Right cardiac atrium (tissue), 5 donors: ENCODE measurements at regions of chr4 and their contacts with region 1.

Region 1: DNA sequence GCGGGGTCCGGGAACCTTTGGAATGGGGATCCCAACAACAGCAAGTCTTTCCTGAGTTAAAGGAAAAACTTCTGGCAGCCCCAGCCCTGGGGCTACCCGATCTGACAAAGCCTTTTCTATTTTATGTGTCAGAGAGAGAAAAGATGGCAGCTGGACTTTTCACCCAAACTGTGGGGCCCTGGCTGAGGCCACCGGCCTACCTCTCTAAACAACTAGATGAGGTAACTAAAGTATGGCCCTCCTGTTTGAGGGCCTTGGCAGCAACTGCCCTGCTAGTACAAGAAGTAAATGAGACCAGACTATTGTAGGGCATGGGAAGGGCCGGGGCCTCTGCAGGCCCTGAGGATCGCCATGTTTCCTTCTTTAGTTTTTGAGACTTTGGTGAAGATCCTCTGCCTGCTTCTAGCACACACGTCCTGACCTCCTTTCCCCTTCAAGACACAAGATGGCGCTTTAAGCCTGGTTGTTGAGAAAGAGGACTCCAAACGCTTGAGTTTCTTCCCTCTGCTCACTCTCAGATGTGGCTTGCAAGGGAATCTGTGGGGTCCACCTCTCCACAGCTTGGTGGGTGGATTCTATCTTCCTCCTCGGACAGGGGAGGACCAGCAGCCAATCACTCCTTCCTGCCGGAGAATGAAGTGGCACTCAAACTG is 18.5 kb upstream of the DRD5 start:
- DNase-seq: no peak
- ATAC-seq: peak in 1 of 2 donors; percentile 46
- H3K4me3 ChIP-seq: no peak overlapping the region
- H3K27ac ChIP-seq: no peak overlapping the region
- H3K4me1 ChIP-seq: no peaks in the 10 kb centered on the region
- H3K27me3 ChIP-seq: no peaks in the 10 kb centered on the region

Region 2: DNA sequence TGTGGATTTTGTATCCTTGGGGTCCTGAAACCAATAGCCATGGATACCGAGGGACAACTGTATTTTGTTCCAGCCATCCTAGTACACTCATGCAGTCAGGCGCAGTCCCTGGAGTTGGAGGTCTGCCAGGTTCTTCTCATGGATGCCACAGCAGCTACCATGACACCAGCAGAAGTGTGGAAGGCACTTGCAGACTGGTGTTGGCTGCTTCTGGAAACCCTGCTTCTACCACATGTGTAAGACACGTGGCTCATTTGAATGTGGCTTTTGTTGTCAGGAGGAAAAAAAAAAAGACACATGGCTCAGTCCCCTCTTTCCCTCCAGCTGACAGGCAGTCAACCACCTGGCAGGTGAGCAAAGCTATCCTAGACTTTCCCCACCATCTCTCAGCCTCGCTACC is 37.9 kb after region 1 on chr4:
- intact Hi-C with region 1: no loop called
- DNase-seq: peak in 1 of 3 donors; percentile 41
- ATAC-seq: no peak
- H3K4me3 ChIP-seq: no peak overlapping the region
- H3K27ac ChIP-seq: no peak overlapping the region
- H3K4me1 ChIP-seq: no peaks in the 10 kb centered on the region
- H3K27me3 ChIP-seq: no peaks in the 10 kb centered on the region

Region 3: GRCh38 chr4:9898596-9899305 is 135.8 kb after region 1 on chr4:
- intact Hi-C with region 1: loop called (anchors 5 to 10 kb)
- DNase-seq: peak; percentile 66 to 80 (median 79)
- ATAC-seq: peak; percentile 91 to 92
- H3K4me3 ChIP-seq: no peak overlapping the region
- H3K27ac ChIP-seq: no peak overlapping the region
- H3K4me1 ChIP-seq: no peaks in the 10 kb centered on the region
- H3K27me3 ChIP-seq: no peaks in the 10 kb centered on the region

Region 4: DNA sequence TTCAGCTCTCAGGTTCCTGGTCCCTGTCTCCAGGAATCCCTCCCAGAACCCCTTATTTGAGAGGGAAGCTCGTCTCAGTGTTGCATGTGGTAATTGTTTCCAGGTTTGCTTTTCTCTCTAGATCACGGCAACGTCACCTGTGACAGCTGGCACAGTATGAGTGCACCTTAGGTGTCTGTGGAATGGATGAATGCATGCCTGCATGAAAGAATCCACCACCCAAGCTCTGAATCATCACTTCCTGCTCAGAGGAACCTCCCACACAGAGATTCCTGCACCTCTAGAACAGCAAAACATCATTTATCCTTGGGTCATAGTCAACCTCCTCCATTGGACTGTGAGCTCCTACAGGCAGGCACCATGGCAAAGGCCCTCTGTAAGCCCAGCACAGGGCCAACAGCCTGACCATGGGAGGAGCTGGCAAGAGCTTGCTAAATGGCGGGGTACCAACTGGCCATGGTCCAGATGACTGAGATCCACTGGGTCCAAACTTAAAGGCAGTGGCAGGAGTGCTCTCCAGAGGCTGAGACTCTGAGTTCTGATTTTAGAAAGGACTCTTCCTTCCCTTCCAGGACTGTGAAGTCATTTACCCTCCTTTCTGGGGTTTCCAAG is 142.1 kb after region 1 on chr4:
- intact Hi-C with region 1: loop called in 1 of 4 experiments (anchors 10 kb)
- DNase-seq: peak in 2 of 3 donors; percentile 64 to 66
- ATAC-seq: peak in 1 of 2 donors; percentile 30
- H3K4me3 ChIP-seq: no peak overlapping the region
- H3K27ac ChIP-seq: no peak overlapping the region
- H3K4me1 ChIP-seq: peaks cover 4% of the 10 kb centered on the region
- H3K27me3 ChIP-seq: no peaks in the 10 kb centered on the region

Region 5: GRCh38 chr4:10013722-10014121 is 250.8 kb after region 1 on chr4:
- intact Hi-C with region 1: loop called (anchors 2 to 5 kb)
- DNase-seq: peak in 2 of 3 donors; percentile 71 to 74
- ATAC-seq: peak; percentile 48 to 50
- H3K4me3 ChIP-seq: no peak overlapping the region
- H3K27ac ChIP-seq: no peak overlapping the region
- H3K4me1 ChIP-seq: peaks cover 3% of the 10 kb centered on the region
- H3K27me3 ChIP-seq: no peaks in the 10 kb centered on the region

Region 6: DNA sequence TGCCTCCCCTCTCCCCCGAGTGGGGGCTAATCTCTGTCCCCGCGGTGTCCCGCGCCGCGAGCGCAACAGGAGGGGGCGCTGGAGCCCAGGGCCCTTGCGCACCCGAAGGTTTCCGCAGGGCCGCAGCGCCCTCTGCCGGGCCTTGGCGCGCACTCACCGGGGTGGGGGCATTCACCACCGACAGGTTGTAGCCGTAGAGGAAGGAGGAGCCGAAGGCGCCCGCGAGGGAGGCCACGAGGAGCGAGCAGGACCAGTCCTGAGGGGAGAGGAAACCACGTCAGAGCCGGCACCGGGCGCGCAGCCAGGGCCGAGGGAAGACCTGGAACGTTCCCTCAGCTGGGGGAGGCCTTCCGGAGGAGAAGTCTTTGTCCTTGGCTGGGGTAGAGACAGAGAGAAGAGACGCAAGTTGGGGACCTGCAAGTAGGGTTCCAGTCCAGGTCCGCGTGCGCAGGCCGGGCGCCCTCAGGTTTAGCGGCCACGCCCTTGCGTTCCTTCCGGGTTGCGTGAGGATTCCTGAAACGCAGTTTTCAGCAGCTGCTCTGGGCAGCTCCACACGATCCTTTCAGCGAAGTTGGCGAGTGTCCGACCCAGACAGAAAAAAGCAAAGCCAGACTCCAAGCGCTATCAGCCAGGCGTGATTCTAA is 256.0 kb after region 1 on chr4:
- intact Hi-C with region 1: loop called in 3 of 4 experiments (anchors 2 to 5 kb)
- DNase-seq: peak; percentile 99 to 100 (median 99)
- ATAC-seq: peak; percentile 96 to 98
- H3K4me3 ChIP-seq: peak overlapping the region; percentile 35
- H3K27ac ChIP-seq: peak overlapping the region; percentile 90
- H3K4me1 ChIP-seq: peaks cover 22% of the 10 kb centered on the region
- H3K27me3 ChIP-seq: no peaks in the 10 kb centered on the region

Region 7: DNA sequence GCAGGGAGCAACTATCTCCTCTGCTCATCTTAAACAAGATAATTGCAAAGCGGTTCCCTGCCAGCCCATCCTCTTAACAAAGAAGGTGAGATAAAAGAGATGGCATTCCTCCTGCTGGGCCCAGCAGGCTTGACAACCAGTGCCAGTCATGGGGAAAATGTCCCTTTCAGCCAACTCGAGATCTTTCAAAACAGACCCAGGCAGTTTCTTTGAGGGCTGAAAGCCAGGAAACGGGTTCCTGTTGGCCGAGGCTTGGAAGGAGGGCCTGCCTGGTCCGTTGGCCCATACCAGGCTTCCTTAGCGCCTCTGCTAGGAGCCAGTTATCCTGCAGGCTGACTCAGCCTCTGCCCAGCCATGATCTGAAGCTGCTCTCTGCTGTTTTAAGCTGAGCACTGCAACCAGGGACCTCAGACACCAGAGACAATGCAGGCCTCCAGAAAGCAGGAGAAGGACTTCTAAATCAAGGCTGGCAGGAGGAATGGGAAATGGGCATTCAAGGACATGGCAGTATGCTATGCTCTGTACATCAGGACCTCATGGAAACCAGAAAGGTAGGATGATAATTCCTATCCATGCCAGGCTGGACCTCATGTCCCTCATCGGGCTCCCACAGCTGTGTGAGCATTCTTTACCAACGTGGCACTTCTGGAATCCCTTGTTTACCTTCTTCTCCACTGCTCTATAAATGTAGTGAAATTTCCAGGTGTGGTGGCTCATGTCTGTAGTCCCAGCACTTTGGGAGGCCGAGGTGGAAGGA is 300.8 kb after region 1 on chr4:
- intact Hi-C with region 1: loop called in 3 of 4 experiments (anchors 5 kb)
- DNase-seq: peak; percentile 82 to 89 (median 86)
- ATAC-seq: peak; percentile 97 to 98
- H3K4me3 ChIP-seq: no peak overlapping the region
- H3K27ac ChIP-seq: peak overlapping the region; percentile 11
- H3K4me1 ChIP-seq: peaks cover 5% of the 10 kb centered on the region
- H3K27me3 ChIP-seq: no peaks in the 10 kb centered on the region

Region 8: DNA sequence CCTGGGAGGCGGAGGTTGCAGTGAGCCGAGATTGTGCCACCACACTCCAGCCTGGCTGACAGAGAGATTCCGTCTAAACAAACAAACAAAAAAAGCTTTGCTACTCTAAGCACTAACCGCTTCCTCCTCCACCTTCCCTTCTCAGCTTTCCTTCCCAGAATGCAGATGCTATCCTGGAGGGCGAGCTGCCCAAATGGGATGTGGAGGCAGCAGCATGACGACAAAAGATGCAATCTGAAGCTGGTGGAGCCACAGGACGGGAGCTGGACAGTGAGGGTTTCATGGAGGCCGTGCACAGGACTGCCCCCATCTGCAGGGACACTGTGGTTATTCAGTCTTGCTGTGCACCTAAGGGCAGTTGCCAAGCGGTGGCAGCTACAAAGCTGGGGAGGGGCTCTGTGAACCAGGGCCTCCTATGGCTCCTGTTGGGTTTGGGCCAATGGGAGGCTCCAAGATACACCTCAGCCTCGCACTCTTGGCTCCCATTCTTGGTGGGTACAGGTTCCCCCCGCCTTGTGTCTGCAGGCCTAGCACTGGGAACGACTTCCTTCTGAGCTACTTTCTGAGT is 306.2 kb after region 1 on chr4:
- intact Hi-C with region 1: loop called in 3 of 4 experiments (anchors 5 kb)
- DNase-seq: peak in 1 of 3 donors; percentile 47
- ATAC-seq: no peak
- H3K4me3 ChIP-seq: no peak overlapping the region
- H3K27ac ChIP-seq: no peak overlapping the region
- H3K4me1 ChIP-seq: no peaks in the 10 kb centered on the region
- H3K27me3 ChIP-seq: no peaks in the 10 kb centered on the region